ENCODE measurements at regions of chr7 and their contacts with region 1.

Region 1: GRCh38 chr7:30983042-30983913 is 19.5 kb downstream of the GHRHR start:
- DNase-seq: peak; percentile 39
- ATAC-seq: peak; percentile 94
- H3K4me3 ChIP-seq: no peak overlapping the region
- H3K27ac ChIP-seq: no peak overlapping the region
- H3K4me1 ChIP-seq: no peaks in the 10 kb centered on the region
- H3K27me3 ChIP-seq: peaks cover 0 to 7% of the 10 kb centered on the region in 2 experiments; a peak in 1 of 5 replicates
- CTCF ChIP-seq: peak; percentile 96
- EP300 ChIP-seq: no peak
- POLR2A ChIP-seq: no peak
- RAD21 ChIP-seq: peak; percentile 80

Region 2: DNA sequence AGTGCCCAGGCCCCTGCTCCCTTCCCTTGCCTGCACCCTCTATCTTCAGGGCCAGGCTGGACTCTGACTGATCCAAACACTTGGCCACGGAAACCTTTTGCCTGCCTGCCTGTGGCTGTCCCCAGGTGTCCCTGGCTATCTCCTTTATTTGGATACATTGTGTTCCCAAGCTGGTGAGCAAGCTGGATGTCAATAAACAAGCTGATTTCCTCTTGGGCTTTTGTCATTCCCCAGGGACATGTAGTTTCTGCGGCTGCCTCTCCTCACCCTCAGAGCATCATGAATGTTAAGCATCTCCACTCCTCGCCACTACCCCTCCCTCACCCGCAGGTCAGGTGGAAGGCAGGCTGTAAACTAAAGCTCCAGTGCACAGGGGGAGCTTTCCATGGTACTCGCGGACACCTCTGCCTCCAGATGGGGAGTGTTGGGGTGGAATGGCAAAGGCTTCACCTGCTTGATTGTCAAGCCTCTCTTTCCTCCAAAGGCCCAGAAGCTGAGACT is 12.6 kb before region 1 on chr7:
- CTCF ChIA-PET with region 1: no interaction called
- POLR2A ChIA-PET with region 1: no interaction called
- in situ Hi-C with region 1: no loop called
- intact Hi-C with region 1: no loop called
- DNase-seq: no peak
- ATAC-seq: no peak
- H3K4me3 ChIP-seq: no peak overlapping the region
- H3K27ac ChIP-seq: no peak overlapping the region
- H3K4me1 ChIP-seq: peaks cover 11% of the 10 kb centered on the region
- H3K27me3 ChIP-seq: no peaks in the 10 kb centered on the region
- CTCF ChIP-seq: no peak
- EP300 ChIP-seq: no peak
- POLR2A ChIP-seq: no peak
- RAD21 ChIP-seq: no peak

Region 3: GRCh38 chr7:31122649-31123058 is 139.4 kb after region 1 on chr7:
- CTCF ChIA-PET with region 1: interaction called, 22 read pairs
- POLR2A ChIA-PET with region 1: interaction called, 4 read pairs
- in situ Hi-C with region 1: loop called (anchors 5 kb)
- intact Hi-C with region 1: loop called (anchors 1 kb)
- DNase-seq: peak; percentile 45
- ATAC-seq: peak; percentile 73
- H3K4me3 ChIP-seq: no peak overlapping the region
- H3K27ac ChIP-seq: no peak overlapping the region
- H3K4me1 ChIP-seq: no peaks in the 10 kb centered on the region
- H3K27me3 ChIP-seq: 0 out of 5 replicates have a peak, but pooled peaks cover 0 to 3% of the 10 kb centered on the region in 2 experiments
- CTCF ChIP-seq: peak; percentile 83
- EP300 ChIP-seq: no peak
- POLR2A ChIP-seq: no peak
- RAD21 ChIP-seq: 0 out of 2 replicates have a peak, but pooled peaks have one; percentile 47